ENCODE measurements at regions of chr3 and their contacts with region 1.

Region 1: DNA sequence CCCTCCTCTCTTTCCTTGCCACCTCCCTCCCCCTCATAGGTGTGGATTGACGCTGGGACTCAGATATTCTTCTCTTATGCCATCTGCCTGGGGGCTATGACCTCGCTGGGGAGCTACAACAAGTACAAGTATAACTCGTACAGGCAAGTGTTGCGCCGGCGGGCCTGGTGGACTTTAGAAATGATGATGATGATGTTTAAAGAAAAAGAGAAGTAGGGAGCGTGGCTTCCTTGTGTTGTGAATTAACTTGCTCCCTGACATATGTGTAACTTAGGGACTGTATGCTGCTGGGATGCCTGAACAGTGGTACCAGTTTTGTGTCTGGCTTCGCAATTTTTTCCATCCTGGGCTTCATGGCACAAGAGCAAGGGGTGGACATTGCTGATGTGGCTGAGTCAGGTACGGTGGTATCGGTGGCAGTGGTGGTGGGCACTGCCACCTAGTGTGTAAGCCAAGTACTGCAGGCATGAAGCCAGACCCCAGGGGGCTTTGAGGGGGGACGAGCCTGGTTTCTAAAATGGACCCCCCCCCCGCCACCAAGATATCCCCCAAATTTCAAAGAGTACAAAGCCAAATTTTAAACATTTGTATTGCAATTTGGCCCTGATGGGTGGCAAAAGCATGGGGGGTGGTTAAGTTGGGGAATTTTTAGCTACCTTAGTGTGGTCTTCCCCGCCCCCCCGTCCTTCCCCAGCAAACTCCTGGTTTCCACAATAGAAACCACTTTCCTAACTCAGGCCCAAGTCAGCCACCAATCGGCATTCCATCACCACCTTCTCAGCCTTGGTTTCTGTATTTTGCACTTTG is 65.6 kb downstream of the SLC6A6 start:
- DNase-seq: peak; percentile 13 to 41 (median 35)
- H3K4me3 ChIP-seq: no peak overlapping the region
- H3K4me3 Mint-ChIP-seq: no peak overlapping the region
- H3K27ac ChIP-seq: peak overlapping the region in 1 of 2 donors; percentile 59
- H3K27ac Mint-ChIP-seq: peak overlapping the region in 6 of 7 donors; percentile 25 to 88 (median 67)
- H3K4me1 ChIP-seq: no peaks in the 10 kb centered on the region
- H3K4me1 Mint-ChIP-seq: peaks cover 6% of the 10 kb centered on the region
- H3K27me3 ChIP-seq: no peaks in the 10 kb centered on the region
- H3K27me3 Mint-ChIP-seq: no peaks in the 10 kb centered on the region
- CTCF ChIP-seq: peak; percentile 95

Region 2: GRCh38 chr3:13895155-13896105 is 572.6 kb before region 1 on chr3:
- intact Hi-C with region 1: loop called in 1 of 2 experiments (anchors 10 kb)
- DNase-seq: peak; percentile 78 to 84 (median 81)
- H3K4me3 ChIP-seq: peak overlapping the region; percentile 36 to 77 (median 65)
- H3K4me3 Mint-ChIP-seq: peak overlapping the region; percentile 90 to 95
- H3K27ac ChIP-seq: peak overlapping the region in 1 of 2 donors; percentile 47
- H3K27ac Mint-ChIP-seq: peak overlapping the region; percentile 57 to 86 (median 84)
- H3K4me1 ChIP-seq: peaks cover 15 to 23% of the 10 kb centered on the region in 2 donors
- H3K4me1 Mint-ChIP-seq: peaks cover 23% of the 10 kb centered on the region
- H3K27me3 ChIP-seq: peaks cover 0 to 17% of the 10 kb centered on the region in 2 donors
- H3K27me3 Mint-ChIP-seq: peaks cover 21 to 32% (median 27%) of the 10 kb centered on the region in 3 donors
- CTCF ChIP-seq: no peak

Region 3: DNA sequence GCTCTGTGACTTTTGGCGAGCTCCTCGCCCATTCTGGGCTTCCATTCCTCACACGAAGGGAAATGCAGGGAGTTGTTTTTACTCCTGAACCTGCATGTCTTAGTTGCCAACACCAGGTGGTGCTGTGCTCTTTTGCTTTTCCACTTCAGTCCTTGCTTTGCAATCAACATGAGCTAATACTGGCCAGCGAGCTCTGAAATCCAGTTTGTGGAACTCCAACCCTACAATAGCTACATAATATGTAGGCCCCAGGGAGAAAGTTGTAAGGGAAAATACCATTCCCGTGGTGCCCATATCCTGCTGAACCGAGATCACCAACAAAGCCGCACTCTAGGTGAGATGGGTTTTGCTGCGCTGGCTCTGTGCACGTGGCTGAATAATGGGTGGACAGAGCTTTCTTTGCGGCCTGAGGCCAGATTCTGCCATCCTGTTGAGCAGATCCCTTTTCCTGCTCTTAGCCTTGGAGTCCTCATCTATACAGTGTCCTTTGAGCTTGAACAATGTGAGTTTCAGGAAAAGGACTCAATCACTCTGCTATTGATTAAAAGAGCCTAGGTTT is 264.4 kb before region 1 on chr3:
- intact Hi-C with region 1: loop called in 1 of 2 experiments (anchors 5 kb)
- DNase-seq: peak; percentile 34 to 61 (median 44)
- H3K4me3 ChIP-seq: no peak overlapping the region
- H3K4me3 Mint-ChIP-seq: no peak overlapping the region
- H3K27ac ChIP-seq: no peak overlapping the region
- H3K27ac Mint-ChIP-seq: no peak overlapping the region
- H3K4me1 ChIP-seq: peaks cover 9 to 11% of the 10 kb centered on the region in 2 donors
- H3K4me1 Mint-ChIP-seq: peaks cover 13% of the 10 kb centered on the region
- H3K27me3 ChIP-seq: no peaks in the 10 kb centered on the region
- H3K27me3 Mint-ChIP-seq: peaks cover 0 to 2% (median 0%) of the 10 kb centered on the region in 3 donors
- CTCF ChIP-seq: peak; percentile 80

Region 4: DNA sequence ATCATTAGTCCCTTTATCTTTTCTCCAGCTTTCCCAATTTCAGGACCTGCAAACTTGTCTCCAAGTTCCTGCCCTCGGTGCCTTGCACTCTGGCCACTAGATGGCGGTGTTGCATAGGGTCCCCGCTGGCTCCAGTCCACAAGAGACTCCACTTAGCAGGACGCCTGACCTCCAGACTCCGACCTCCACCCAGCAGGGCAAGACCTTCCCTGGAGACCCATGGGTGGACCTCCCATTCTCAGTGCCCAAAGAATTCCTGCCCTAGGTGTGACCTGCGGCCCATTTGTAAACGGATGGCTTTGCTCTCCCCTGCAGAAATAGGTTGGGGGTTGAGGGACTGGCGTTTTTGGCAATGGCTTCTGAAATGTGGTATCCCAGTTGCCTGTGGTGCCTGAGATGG is 206.8 kb before region 1 on chr3:
- intact Hi-C with region 1: loop called (anchors 1 to 2 kb)
- DNase-seq: peak; percentile 66 to 76 (median 68)
- H3K4me3 ChIP-seq: no peak overlapping the region
- H3K4me3 Mint-ChIP-seq: no peak overlapping the region
- H3K27ac ChIP-seq: no peak overlapping the region
- H3K27ac Mint-ChIP-seq: no peak overlapping the region
- H3K4me1 ChIP-seq: no peaks in the 10 kb centered on the region
- H3K4me1 Mint-ChIP-seq: peaks cover 2% of the 10 kb centered on the region
- H3K27me3 ChIP-seq: no peaks in the 10 kb centered on the region
- H3K27me3 Mint-ChIP-seq: peaks cover 0 to 2% (median 0%) of the 10 kb centered on the region in 3 donors
- CTCF ChIP-seq: peak; percentile 93

Measured in CD14-positive monocyte (primary cell).